ENCODE measurements at regions of chr5 and their contacts with region 1.

Region 1: DNA sequence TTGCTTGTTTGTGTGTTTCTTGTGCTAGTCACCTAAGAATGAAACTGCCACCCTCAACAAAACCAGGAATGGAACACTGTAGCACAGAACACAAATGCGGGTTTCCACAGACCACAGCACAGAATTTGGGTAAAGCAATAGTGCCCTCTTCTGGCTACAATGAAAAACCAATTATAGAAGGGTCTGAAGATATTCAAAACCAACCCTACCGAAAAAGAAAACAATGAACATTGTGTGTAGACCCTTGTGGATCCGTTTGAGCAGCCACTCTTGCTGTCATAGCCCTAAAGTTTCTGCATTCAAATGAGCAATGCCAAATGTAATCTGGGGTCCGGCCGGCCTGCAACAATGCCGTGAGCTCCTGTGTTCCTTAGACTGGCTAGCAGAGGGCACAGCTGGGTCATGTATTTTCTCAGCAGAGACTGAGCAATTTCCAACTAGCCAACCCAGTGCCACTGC is 8.3 kb upstream of the ENC1 start:
- DNase-seq: no peak
- ATAC-seq: peak; percentile 89

Region 2: GRCh38 chr5:73902327-73903051 is 746.4 kb before region 1 on chr5:
- intact Hi-C with region 1: loop called (anchors 5 kb)
- DNase-seq: no peak
- ATAC-seq: peak; percentile 56